ENCODE measurements at regions of chr5 and their contacts with region 1.

Region 1: DNA sequence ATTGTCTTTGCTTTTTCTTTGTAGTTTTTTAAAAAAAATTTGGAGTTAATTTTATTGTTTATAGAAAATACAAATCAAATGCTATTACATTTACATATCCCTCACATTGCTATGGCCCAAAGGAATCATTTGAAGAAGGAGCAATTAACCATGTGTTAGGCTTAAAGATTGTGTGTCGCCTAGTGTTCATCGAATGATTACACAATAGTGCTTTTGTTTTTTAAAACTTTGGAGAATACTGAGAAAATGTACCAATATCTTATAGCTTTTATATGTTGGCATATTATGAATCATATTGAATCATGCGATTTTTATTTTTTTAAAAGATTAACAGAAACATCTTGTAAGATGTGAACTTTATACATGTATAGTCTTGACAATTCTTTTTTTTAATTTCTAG is 21.7 kb downstream of the SLC30A5 start:
- DNase-seq: no peak
- H3K4me3 ChIP-seq: no peak overlapping the region
- H3K27ac ChIP-seq: no peak overlapping the region
- H3K4me1 ChIP-seq: no peaks in the 10 kb centered on the region
- H3K27me3 ChIP-seq: no peaks in the 10 kb centered on the region
- CTCF ChIP-seq: no peak

Region 2: DNA sequence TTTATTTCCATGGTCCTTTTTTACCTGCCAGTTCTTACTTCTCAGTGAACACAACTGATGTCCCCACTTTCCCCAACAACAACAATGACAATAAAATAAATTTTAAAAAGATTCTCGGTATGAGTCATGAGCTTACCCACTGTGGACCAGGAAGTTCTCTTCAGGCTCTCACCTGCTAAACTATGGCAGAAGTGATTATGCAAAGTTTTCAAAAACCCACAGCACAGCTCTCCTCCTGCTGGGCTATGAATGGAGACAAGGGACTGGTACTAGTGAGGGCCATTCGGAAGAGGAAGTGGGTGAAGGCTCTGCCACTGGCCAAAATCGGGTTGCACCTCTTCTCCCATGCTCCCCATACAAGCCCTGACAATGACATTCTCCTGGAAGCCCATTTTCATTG is 470.6 kb before region 1 on chr5:
- CTCF ChIA-PET with region 1: no interaction called
- dilution Hi-C with region 1: no loop called
- in situ Hi-C with region 1: no loop called
- intact Hi-C with region 1: no loop called
- DNase-seq: no peak
- H3K4me3 ChIP-seq: no peak overlapping the region
- H3K27ac ChIP-seq: no peak overlapping the region
- H3K4me1 ChIP-seq: no peaks in the 10 kb centered on the region
- H3K27me3 ChIP-seq: no peaks in the 10 kb centered on the region
- CTCF ChIP-seq: no peak

Region 3: DNA sequence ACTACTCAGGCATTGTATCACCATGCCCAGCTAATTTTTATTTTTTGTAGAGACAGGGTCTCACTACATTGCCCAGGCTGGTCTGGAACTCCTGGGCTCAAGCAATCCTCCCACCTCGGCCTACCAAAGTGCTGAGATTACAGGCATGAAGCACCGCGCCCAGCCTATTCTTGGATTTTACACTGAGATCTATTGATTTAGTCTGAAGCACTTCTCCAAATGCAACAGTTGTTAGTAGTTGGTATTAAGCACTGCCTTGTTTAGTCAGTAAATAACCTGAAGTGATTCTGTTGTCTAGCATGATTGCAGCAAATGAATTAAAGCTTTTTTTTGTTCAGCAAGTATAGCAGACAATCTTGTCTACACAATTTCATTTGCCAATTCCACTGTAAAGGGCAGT is 42.5 kb after region 1 on chr5:
- CTCF ChIA-PET with region 1: no interaction called
- dilution Hi-C with region 1: loop called (anchors 5 kb)
- in situ Hi-C with region 1: no loop called
- intact Hi-C with region 1: no loop called
- DNase-seq: no peak
- H3K4me3 ChIP-seq: no peak overlapping the region
- H3K27ac ChIP-seq: no peak overlapping the region
- H3K4me1 ChIP-seq: no peaks in the 10 kb centered on the region
- H3K27me3 ChIP-seq: no peaks in the 10 kb centered on the region
- CTCF ChIP-seq: no peak

Measured in mammary epithelial cell (primary cell).